CD8-positive, alpha-beta T cell (primary cell): ENCODE measurements at regions of chr5 and their contacts with region 1.

Region 1: DNA sequence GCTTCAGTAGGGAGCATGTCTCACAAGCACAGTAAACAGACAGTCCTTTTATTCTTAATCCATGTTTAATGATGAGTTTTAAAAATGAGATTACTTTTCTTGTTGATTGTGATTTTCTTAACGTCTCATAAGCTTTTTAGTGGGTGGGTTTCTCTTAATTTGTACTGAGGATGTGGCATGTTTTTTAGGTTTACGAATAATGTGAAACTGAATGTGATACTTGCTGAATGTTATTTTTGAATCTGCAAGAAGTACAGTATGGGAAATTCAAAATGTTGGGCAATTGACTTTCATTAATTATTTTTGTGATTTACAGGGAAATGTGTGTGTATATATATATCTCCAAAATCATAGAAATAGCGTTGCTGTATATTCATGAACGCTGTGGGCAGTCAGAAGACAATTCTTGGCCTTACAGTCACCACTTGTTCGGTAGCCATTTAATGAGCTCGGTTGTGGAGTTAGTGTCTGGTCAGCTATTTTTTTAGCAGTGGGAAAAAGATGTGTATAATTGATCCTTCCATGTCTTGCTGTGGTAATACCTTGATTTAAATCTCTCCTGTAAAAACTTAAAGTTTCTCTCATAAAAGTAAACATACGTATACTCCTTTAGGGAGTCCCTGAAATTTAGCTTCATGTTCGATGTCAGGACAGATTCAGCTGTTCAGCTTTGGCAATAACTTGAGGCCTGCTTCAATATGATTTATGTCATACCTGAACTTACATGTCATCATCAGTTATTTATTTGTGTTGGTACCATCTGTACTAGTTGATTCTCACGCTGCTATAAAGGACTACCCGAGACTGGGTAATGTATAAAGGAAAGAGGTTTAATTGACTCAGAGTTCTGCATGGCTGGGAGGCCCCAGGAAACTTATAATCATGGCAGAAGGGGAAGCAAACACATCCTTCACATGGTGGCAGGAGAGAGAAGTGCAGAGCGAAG is 15.0 kb downstream of the ICE1 start:
- DNase-seq: no peak
- ATAC-seq: no peak
- H3K4me3 ChIP-seq: no peak overlapping the region
- H3K4me3 Mint-ChIP-seq: no peak overlapping the region
- H3K27ac ChIP-seq: no peak overlapping the region
- H3K27ac Mint-ChIP-seq: no peak overlapping the region
- H3K4me1 ChIP-seq: no peaks in the 10 kb centered on the region
- H3K4me1 Mint-ChIP-seq: peaks cover 17% of the 10 kb centered on the region
- H3K27me3 ChIP-seq: no peaks in the 10 kb centered on the region
- H3K27me3 Mint-ChIP-seq: no peaks in the 10 kb centered on the region
- CTCF ChIP-seq: no peak

Region 2: DNA sequence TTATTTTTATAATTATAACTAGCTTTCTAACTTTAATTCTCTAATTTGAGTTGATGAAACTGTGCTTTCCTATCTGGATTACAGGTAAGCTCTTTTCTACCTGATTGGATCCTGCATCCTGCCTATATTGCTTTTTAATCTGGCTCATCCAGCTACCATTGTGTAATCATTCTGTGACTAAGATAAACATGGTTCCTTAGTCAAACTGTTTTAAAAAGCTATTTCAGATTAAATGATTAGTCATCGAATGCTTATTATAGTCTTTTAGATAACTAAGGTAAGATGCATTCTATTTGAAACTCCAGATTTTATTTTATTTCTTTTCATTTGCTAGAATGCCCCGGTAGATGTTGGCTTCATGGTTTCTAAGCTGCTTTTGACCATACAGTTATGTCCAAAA is 35.7 kb after region 1 on chr5:
- CTCF ChIA-PET with region 1: no interaction called
- POLR2A ChIA-PET with region 1: no interaction called
- intact Hi-C with region 1: loop called (anchors 5 kb)
- DNase-seq: no peak
- ATAC-seq: no peak
- H3K4me3 ChIP-seq: no peak overlapping the region
- H3K4me3 Mint-ChIP-seq: no peak overlapping the region
- H3K27ac ChIP-seq: no peak overlapping the region
- H3K27ac Mint-ChIP-seq: no peak overlapping the region
- H3K4me1 ChIP-seq: no peaks in the 10 kb centered on the region
- H3K4me1 Mint-ChIP-seq: no peaks in the 10 kb centered on the region
- H3K27me3 ChIP-seq: no peaks in the 10 kb centered on the region
- H3K27me3 Mint-ChIP-seq: no peaks in the 10 kb centered on the region
- CTCF ChIP-seq: no peak